ENCODE measurements at regions of chr5 and their contacts with region 1.

Region 1: GRCh38 chr5:138641547-138642298 is 66.5 kb upstream of the HSPA9 start:
- DNase-seq: peak; percentile 73
- H3K4me3 ChIP-seq: no peak overlapping the region
- H3K27ac ChIP-seq: no peak overlapping the region
- H3K4me1 ChIP-seq: no peaks in the 10 kb centered on the region
- H3K27me3 ChIP-seq: no peaks in the 10 kb centered on the region
- CTCF ChIP-seq: peak; percentile 58 to 74 (median 65)
- EP300 ChIP-seq: no peak
- POLR2A ChIP-seq: no peak

Region 2: DNA sequence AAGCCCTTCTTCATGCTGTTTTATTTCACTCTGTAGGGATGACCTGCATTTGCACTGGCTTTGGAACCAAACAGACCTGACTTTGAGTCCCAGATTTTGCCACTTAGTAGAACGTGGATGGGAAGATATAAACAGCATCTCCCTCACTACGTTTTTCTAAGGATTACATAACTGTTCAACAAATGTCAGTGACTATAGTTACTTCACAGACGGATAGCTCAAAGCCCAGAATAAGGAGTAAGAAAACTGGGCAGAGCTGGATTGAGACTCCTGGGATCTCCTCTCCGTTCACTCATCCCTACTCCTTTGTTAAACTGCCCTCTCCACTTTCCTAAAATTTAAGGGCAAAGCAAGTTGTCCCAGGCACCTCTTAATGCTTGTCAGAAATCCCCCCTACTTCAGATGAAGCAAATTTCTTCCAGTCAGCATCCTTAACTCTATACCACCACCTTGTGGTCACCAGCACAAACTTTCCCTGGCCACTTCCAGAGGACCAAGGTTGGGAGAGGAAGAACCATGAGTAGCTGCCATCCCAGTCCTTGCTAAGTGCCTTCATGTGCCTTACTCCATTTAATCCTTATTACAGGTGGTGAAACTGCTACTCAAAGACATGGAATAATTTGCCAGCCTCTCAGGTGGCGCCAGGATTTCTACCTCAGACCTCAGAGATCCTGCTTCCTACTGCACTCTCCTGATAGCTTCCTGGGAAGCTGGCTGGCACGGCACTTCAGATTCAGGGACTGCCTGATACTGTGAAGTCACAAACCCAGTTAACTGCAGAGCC is 138.0 kb before region 1 on chr5:
- in situ Hi-C with region 1: no loop called
- intact Hi-C with region 1: no loop called
- DNase-seq: peak; percentile 19
- H3K4me3 ChIP-seq: no peak overlapping the region
- H3K27ac ChIP-seq: peak overlapping the region in 3 of 4 donors; percentile 13 to 57 (median 14)
- H3K4me1 ChIP-seq: peaks cover 0 to 6% (median 4%) of the 10 kb centered on the region in 4 donors
- H3K27me3 ChIP-seq: no peaks in the 10 kb centered on the region
- CTCF ChIP-seq: peak; percentile 67 to 83 (median 74)
- EP300 ChIP-seq: no peak
- POLR2A ChIP-seq: no peak

Region 3: GRCh38 chr5:139273572-139274289 is 632.0 kb after region 1 on chr5:
- in situ Hi-C with region 1: loop called in 3 of 4 experiments (anchors 25 kb)
- intact Hi-C with region 1: no loop called
- DNase-seq: peak; percentile 94
- H3K4me3 ChIP-seq: peak overlapping the region; percentile 31 to 58 (median 45)
- H3K27ac ChIP-seq: peak overlapping the region; percentile 83 to 92 (median 87)
- H3K4me1 ChIP-seq: peaks cover 13 to 76% (median 51%) of the 10 kb centered on the region in 4 donors
- H3K27me3 ChIP-seq: no peaks in the 10 kb centered on the region
- CTCF ChIP-seq: peak in 4 of 5 experiments; percentile 9 to 44 (median 26)
- EP300 ChIP-seq: no peak
- POLR2A ChIP-seq: peak; percentile 73